Activated CD8-positive, alpha-beta memory T cell treated with anti-CD3 and anti-CD28 coated beads, Interleukin-2, amount 10 ng/mL, durations not matched to agents 7 days and 5 days (primary cell): ENCODE measurements at regions of chr7 and their contacts with region 1.

Region 1: DNA sequence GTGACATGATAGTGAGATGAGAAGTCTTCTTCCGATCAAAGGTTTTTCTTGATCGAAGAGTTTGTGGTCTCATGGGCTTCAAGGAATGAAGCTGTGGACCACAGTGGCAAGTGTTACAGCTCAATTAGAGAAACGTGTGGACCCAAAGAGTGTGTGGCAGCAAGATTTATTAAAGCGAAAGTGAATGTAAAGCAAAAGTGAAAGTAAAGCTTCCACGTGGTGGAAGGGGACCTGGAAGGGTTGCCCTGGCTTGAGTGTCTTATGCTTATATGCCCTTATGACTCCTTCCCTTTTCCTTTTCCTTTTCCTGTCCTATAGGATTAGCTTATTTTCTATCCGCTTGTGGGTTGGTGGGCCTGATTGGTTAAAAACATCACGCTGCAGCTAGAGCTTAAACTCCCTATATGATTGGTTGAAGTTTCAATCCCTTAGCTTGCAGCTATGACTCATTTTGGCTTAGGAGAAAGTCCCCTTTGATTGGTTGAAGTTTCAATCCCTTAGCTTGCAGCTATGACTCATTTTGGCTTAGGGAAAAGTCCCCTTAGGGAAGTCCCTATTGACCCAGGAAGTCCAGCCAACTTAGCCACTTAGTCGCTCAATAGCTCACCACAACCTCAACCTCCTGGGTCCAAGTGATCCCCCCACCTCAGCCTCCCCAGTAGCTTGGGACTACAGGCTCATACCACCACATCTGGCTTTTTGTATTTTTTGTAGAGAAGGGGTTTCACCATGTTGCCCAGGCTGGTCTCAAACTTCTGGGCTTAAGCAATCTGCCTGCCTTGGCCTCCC is 34.7 kb downstream of the MRPS24 start:
- DNase-seq: peak; percentile 62
- ATAC-seq: peak; percentile 76
- H3K4me3 Mint-ChIP-seq: peak overlapping the region; percentile 78
- H3K27ac Mint-ChIP-seq: peak overlapping the region; percentile 95
- H3K4me1 Mint-ChIP-seq: peaks cover 28% of the 10 kb centered on the region
- H3K27me3 Mint-ChIP-seq: peaks cover 13% of the 10 kb centered on the region

Region 2: GRCh38 chr7:43572516-43573049 is 262.1 kb before region 1 on chr7:
- CTCF ChIA-PET with region 1: interaction called, 10 read pairs
- DNase-seq: peak; percentile 81
- ATAC-seq: peak; percentile 89
- H3K4me3 Mint-ChIP-seq: no peak overlapping the region
- H3K27ac Mint-ChIP-seq: peak overlapping the region; percentile 71
- H3K4me1 Mint-ChIP-seq: peaks cover 53% of the 10 kb centered on the region
- H3K27me3 Mint-ChIP-seq: no peaks in the 10 kb centered on the region

Region 3: GRCh38 chr7:43729214-43729923 is 105.3 kb before region 1 on chr7 and contains the start of gene COA1:
- CTCF ChIA-PET with region 1: interaction called, 32 read pairs
- DNase-seq: peak; percentile 85
- ATAC-seq: peak; percentile 96
- H3K4me3 Mint-ChIP-seq: peak within 1 kb of the TSS; percentile 94
- H3K27ac Mint-ChIP-seq: peak within 1 kb of the TSS; percentile 86
- H3K4me1 Mint-ChIP-seq: peaks cover 33% of the 10 kb centered on the region
- H3K27me3 Mint-ChIP-seq: peaks cover 3% of the 10 kb centered on the region
- total RNA-seq, gene COA1: 66.7 to 73.0 TPM

Region 4: DNA sequence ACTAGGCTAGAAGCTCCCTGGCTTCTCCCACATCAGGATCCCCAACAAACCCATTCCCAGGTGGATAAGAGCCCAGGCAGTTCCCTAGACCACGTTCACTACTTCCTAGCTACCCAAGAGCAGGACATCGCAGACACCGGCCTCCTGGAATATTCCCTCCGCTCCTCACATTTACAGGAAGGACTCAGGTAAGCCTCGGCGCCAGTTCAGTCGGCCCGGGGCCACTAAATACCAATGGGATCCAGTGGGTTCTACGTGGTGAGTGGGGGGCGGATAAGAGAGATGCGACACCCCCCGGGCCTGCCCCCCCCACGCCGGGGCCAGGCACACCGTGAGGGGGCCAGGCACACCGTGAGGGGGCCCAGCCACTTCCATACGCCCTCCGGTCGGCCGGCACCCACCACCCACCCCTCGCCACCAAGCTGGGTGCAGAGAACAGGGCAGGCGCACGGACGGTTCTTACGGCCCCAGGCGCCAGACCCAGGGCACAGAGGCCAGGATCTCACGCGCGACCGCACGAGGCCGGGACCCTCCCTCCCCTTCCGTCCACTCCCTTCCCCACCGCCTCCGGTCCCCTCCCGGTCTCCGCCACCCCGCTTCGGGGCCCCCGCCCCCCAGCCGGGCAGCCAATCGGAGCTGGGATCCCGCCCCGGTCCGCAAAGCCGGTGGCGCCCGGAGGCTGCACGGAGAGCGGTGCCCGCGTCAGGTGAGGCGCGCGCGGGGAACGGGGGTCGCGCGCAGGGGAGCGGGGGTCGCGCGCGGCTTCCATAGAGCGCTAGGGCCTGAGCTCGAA is 76.4 kb before region 1 on chr7 and contains the start of gene BLVRA:
- CTCF ChIA-PET with region 1: interaction called, 21 read pairs
- DNase-seq: peak; percentile 73
- ATAC-seq: peak; percentile 90
- H3K4me3 Mint-ChIP-seq: peak within 1 kb of the TSS; percentile 64
- H3K27ac Mint-ChIP-seq: peak within 1 kb of the TSS; percentile 68
- H3K4me1 Mint-ChIP-seq: peaks cover 33% of the 10 kb centered on the region
- H3K27me3 Mint-ChIP-seq: peaks cover 9% of the 10 kb centered on the region
- total RNA-seq, gene BLVRA: 37.2 to 46.9 TPM

Region 5: DNA sequence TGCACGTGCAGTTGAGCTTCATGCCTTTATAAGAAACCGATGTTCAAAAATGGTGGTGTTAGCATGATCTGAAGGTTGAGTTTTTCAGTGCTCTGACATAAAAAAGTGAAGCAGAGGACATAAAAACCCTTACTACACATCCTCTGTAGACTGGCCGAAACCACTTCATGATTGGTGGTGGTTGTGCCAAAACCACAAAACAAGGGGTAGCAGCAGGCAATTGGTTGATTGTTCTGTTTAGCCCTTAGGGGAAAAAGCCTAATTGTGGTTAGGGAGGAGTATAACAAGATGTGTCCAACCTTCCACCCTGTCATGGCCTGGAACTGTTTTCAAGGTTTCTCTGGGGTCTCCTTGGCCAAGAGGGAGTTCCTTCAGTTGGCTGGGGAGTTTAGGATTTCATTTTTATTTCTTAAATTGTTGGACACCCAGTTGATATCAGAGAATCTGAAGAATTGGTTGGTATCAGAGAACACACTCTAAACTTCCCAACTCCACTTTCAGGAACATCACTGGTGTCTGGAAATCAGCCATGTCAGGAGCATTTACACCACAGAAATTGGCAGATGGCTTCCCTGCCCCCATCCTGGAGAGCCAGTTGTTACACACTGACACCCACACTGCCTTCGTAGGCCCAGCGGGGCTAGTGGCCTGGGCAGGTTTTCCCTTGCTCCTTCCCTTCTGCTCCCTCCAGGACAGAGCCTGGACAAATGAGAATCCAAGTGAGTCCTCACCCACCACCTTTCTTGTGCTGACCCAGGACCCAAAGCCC is 15.9 kb after region 1 on chr7:
- CTCF ChIA-PET with region 1: interaction called, 25 read pairs
- DNase-seq: no peak
- ATAC-seq: no peak
- H3K4me3 Mint-ChIP-seq: no peak overlapping the region
- H3K27ac Mint-ChIP-seq: no peak overlapping the region
- H3K4me1 Mint-ChIP-seq: peaks cover 8% of the 10 kb centered on the region
- H3K27me3 Mint-ChIP-seq: no peaks in the 10 kb centered on the region

Region 6: DNA sequence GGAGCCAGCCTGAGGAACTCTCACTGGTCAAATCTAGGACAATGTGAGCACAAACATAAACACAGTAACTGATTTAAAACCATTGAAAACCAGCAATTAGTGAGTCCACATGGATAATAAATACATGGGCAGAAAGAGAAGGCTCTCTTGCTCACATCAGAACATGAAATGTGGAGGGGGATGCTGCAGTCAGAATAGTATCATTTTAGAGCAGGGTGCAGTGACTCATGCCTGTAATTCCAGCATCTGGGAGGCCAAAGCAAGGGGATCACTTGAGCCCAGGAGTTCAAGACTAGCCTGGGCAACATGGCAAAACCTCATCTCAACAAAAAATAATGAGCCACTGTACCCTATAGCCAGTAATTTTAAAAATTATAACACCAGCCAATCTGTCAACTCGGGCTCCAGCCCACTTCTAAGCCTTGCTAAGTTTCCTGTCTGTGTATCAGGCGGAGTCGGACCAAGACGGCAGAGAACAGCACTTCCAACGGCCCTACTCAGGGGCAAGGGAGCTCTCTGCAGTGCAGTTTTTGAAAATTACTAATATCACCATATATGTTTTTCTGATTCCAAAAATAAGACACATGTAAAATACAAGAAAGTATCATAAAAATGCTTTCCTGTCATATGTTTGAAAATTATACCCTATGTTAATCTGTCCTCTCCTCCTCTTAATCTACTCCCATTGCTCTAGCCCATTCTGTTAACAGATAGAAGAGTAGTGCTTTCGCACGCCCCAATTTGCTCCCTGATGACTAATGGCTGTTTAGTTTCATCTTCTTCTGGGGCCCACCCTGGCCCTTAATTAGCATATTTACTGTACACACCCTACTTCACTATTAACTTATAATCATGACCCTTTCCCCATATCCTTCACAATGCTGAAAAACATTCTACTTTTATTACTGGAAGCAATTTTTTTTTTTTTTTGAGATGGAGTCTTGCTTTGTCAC is 54.6 kb after region 1 on chr7:
- CTCF ChIA-PET with region 1: no interaction called
- DNase-seq: no peak
- ATAC-seq: no peak
- H3K4me3 Mint-ChIP-seq: no peak overlapping the region
- H3K27ac Mint-ChIP-seq: no peak overlapping the region
- H3K4me1 Mint-ChIP-seq: peaks cover 25% of the 10 kb centered on the region
- H3K27me3 Mint-ChIP-seq: no peaks in the 10 kb centered on the region